Mammary epithelial cell (primary cell): ENCODE measurements at regions of chr15 and their contacts with region 1.

Region 1: DNA sequence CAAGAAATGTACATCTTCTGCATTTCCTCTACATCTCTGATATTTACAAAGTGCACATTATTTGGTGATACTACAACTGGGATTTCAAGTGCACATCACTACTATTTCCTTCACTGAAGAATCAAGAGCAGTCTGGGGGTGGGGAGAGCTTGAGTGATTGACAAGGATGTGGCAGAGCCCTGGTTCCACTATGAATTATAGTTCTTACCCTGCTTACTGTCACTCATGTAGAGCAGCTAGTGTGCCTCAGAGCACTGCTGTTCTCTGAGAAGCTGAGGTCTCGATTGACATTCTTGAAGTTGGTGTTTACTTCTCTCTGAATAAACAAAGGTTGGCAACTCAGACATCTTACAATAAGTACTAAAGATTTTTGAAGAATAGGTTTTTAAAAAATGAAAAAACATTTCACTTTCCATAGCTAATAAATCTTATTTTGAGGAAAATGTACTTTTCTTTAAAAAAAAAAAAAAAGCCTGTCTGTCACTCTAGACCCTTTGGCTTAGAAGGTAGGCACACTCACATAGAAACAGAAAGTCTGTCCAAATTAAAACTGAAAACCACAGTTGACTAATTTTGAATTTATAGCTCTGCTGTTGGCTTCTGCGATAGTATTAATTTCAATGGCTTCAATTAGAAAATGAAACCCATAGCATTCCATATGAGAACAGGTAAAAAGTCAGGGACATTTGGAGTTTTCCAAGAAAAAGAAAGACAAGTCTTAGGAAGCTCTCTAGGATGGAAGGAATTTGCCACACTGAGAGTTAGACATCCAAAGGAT is 5.6 kb downstream of the GREM1 start:
- DNase-seq: no peak
- H3K4me3 ChIP-seq: no peak overlapping the region
- H3K27ac ChIP-seq: no peak overlapping the region
- H3K4me1 ChIP-seq: peaks cover 7% of the 10 kb centered on the region
- H3K27me3 ChIP-seq: peaks cover 16% of the 10 kb centered on the region
- CTCF ChIP-seq: no peak

Region 2: GRCh38 chr15:32781781-32782180 is 58.4 kb after region 1 on chr15:
- CTCF ChIA-PET with region 1: no interaction called
- dilution Hi-C with region 1: no loop called
- in situ Hi-C with region 1: loop called in 1 of 2 experiments (anchors 10 kb)
- intact Hi-C with region 1: no loop called
- DNase-seq: no peak
- H3K4me3 ChIP-seq: no peak overlapping the region
- H3K27ac ChIP-seq: no peak overlapping the region
- H3K4me1 ChIP-seq: no peaks in the 10 kb centered on the region
- H3K27me3 ChIP-seq: no peaks in the 10 kb centered on the region
- CTCF ChIP-seq: no peak